WTC11 (cell line): ENCODE measurements at regions of chr12 and their contacts with region 1.

Region 1: GRCh38 chr12:49088190-49088931 is 6.2 kb downstream of the DHH start:
- DNase-seq: peak; percentile 75
- ATAC-seq: peak; percentile 78
- H3K4me3 Mint-ChIP-seq: peak overlapping the region; percentile 50
- H3K27ac Mint-ChIP-seq: no peak overlapping the region
- H3K4me1 Mint-ChIP-seq: peaks cover 40% of the 10 kb centered on the region
- H3K27me3 Mint-ChIP-seq: peaks cover 92% of the 10 kb centered on the region
- CTCF ChIP-seq: peak; percentile 83

Region 2: DNA sequence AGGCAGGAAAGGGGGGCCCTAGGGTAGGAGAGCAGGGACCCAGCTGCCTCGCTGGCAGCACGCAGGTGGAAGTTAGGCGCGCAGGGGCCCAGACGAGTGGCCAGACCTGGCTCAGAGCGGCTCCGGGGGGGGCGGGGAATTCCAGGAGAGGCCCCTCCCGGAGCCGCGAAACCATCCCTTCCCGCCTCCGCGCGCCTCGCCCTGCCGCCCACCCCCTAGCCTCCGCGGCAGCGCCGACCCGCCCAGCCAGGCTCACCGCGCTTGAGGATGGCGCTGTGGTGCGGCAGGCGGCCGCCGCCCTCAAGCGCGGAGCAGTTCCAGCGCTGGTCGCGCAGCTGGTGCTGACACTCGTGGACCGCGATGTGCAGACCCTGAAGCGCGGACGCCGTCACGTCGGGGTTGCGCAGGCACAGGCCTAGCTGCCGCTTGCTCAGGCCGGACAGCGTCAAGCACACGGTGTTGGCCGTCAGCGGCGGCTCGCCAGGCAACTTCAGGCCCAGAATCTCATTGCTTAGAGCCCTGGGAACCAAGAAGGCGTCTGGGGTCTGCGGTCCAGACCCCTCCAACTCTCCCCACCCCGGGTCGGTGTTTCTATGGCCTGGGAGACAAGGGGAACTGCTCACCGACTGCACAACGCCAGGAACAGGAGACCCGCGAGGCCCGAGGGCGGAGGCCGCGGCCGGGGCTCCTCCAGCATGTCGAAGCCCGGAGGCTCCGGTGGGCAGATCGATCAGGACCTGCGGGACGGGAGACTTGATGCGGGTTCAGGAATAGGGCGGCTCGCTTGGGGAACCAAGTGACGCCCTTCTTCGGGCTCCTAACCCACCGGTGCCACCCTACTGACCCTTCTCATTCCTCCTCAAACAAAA is 118.3 kb before region 1 on chr12:
- CTCF ChIA-PET with region 1: interaction called, 12 read pairs
- POLR2A ChIA-PET with region 1: no interaction called
- DNase-seq: peak; percentile 48
- ATAC-seq: peak; percentile 3; the same call in 1 of the 2 replicates
- H3K4me3 Mint-ChIP-seq: peak overlapping the region; percentile 86
- H3K27ac Mint-ChIP-seq: no peak overlapping the region
- H3K4me1 Mint-ChIP-seq: peaks cover 54% of the 10 kb centered on the region
- H3K27me3 Mint-ChIP-seq: peaks cover 89% of the 10 kb centered on the region
- CTCF ChIP-seq: no peak

Region 3: DNA sequence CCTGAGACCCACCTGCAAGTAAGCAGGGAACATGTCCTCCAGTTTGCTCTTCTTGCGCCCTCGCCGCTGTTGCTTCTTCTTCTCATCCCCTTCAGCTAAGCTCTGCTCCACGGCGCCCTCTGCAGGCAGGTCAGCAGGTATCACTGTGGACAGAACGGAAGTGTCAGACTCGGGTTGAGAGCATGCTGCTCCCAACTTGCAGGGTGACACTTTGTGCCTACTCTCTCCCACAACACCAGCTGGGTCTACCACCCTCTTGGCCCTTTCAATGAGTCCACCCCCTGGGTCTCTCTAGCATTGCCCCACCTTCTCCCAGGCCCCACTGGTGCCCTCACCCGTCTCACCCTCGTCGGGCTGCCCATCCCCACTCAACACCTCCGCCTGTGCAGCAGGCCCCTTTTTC is 44.5 kb before region 1 on chr12:
- CTCF ChIA-PET with region 1: interaction called, 21 read pairs
- POLR2A ChIA-PET with region 1: no interaction called
- DNase-seq: peak; percentile 91
- ATAC-seq: peak; percentile 86
- H3K4me3 Mint-ChIP-seq: no peak overlapping the region
- H3K27ac Mint-ChIP-seq: no peak overlapping the region
- H3K4me1 Mint-ChIP-seq: no peaks in the 10 kb centered on the region
- H3K27me3 Mint-ChIP-seq: no peaks in the 10 kb centered on the region
- CTCF ChIP-seq: peak; percentile 76

Region 4: GRCh38 chr12:49069507-49070346 is 18.6 kb before region 1 on chr12 and contains the start of gene RHEBL1:
- CTCF ChIA-PET with region 1: interaction called, 73 read pairs
- POLR2A ChIA-PET with region 1: interaction called, 6 read pairs
- DNase-seq: peak; percentile 95
- ATAC-seq: peak; percentile 96
- H3K4me3 Mint-ChIP-seq: peak within 1 kb of the TSS; percentile 99
- H3K27ac Mint-ChIP-seq: peak within 1 kb of the TSS; percentile 7; the same call in 1 of the 2 replicates
- H3K4me1 Mint-ChIP-seq: peaks cover 15% of the 10 kb centered on the region
- H3K27me3 Mint-ChIP-seq: peaks cover 20% of the 10 kb centered on the region
- CTCF ChIP-seq: no peak
- total RNA-seq, gene RHEBL1: 6.4 to 9.0 TPM (median 6.9 TPM) in 3 replicates

Region 5: GRCh38 chr12:49121047-49121696 is 32.8 kb after region 1 on chr12:
- CTCF ChIA-PET with region 1: interaction called, 64 read pairs
- POLR2A ChIA-PET with region 1: interaction called, 3 read pairs
- DNase-seq: peak; percentile 45
- ATAC-seq: peak; percentile 93
- H3K4me3 Mint-ChIP-seq: no peak overlapping the region
- H3K27ac Mint-ChIP-seq: no peak overlapping the region
- H3K4me1 Mint-ChIP-seq: no peaks in the 10 kb centered on the region
- H3K27me3 Mint-ChIP-seq: peaks cover 9% of the 10 kb centered on the region
- CTCF ChIP-seq: no peak

Region 6: GRCh38 chr12:49138999-49139398 is 50.6 kb after region 1 on chr12:
- CTCF ChIA-PET with region 1: no interaction called
- POLR2A ChIA-PET with region 1: no interaction called
- DNase-seq: no peak
- ATAC-seq: no peak
- H3K4me3 Mint-ChIP-seq: no peak overlapping the region
- H3K27ac Mint-ChIP-seq: no peak overlapping the region
- H3K4me1 Mint-ChIP-seq: no peaks in the 10 kb centered on the region
- H3K27me3 Mint-ChIP-seq: no peaks in the 10 kb centered on the region; the same call in 1 of the 2 replicates
- CTCF ChIP-seq: no peak

Region 7: GRCh38 chr12:49232940-49233841 is 144.8 kb after region 1 on chr12:
- CTCF ChIA-PET with region 1: interaction called, 26 read pairs
- POLR2A ChIA-PET with region 1: no interaction called
- DNase-seq: peak; percentile 62
- ATAC-seq: peak; percentile 34
- H3K4me3 Mint-ChIP-seq: peak overlapping the region; percentile 38
- H3K27ac Mint-ChIP-seq: no peak overlapping the region
- H3K4me1 Mint-ChIP-seq: peaks cover 27% of the 10 kb centered on the region
- H3K27me3 Mint-ChIP-seq: peaks cover 6% of the 10 kb centered on the region; the same call in 1 of the 2 replicates
- CTCF ChIP-seq: no peak